Calu3 (cell line): ENCODE measurements at regions of chr3 and their contacts with region 1.

Region 1: DNA sequence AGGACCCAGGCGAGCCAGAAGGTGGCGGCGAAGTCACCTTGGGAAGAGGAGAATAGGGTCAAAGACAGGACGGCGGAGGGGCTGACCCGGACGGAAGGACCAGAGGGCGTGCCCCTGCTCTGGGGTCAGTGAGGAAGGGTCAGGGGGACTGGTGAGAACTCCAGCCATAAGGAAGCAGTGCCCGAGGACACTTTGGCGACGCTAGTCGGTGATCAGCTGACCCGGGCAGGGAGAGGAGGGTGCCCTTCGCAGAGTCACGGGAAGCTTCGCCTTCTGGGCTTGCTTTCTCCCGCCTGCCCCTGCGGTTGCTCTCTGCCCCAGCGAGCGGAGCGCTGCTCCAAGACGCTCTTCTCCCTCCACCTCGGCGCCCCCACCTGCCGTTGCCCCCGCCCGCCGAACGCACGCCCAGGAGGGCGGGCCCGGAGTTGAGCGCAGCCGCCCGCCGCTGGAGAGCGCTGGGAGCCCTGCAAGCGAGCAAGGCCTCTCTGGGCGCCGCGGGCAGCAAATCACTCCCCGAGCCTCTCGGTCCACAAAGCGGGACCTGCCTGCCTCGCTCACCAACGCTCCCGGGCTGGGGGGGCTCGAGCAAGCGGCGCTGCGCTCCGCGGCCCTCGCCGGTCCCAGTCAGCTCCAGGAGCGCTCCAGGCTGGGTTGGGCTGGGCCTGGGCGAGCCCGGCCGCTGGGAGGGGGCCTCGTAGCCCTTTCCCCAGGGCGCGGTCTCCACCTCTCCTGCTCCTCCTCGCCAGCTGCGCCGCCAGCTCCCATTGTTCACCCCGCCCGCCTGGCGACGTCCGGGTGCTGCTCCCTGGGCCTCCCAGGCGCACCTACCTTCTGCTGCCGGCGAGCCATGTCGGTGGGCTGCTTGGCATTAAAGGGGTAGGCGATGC is 1.2 kb downstream of the CADPS start:
- DNase-seq: peak; percentile 55
- H3K4me3 Mint-ChIP-seq: peak overlapping the region; percentile 88
- H3K27ac Mint-ChIP-seq: no peak overlapping the region
- H3K4me1 Mint-ChIP-seq: peaks cover 8% of the 10 kb centered on the region
- H3K27me3 Mint-ChIP-seq: peaks cover 62% of the 10 kb centered on the region
- CTCF ChIP-seq: no peak

Region 2: DNA sequence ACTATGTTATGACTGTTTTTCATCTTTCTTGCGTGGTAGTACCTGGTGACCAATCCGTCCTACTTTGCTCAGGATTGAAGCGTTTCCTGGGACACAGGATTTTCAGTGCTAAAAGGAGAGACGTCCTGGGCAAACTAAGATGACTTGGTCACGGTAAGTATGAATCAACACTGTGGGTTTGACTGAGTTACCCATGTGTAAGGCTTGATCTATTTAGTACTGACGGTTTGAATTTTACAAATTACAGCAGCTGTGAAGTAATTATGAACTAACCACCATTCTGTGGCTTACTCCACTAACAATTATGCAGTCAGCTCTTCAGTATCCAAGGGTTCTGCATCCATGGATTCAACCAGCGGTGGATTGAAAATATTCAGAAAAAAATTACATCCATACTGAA is 327.7 kb before region 1 on chr3:
- CTCF ChIA-PET with region 1: no interaction called
- intact Hi-C with region 1: no loop called
- DNase-seq: no peak
- H3K4me3 Mint-ChIP-seq: no peak overlapping the region
- H3K27ac Mint-ChIP-seq: no peak overlapping the region
- H3K4me1 Mint-ChIP-seq: no peaks in the 10 kb centered on the region
- H3K27me3 Mint-ChIP-seq: peaks cover 13% of the 10 kb centered on the region
- CTCF ChIP-seq: no peak

Region 3: GRCh38 chr3:62665598-62666437 is 208.2 kb before region 1 on chr3:
- CTCF ChIA-PET with region 1: interaction called, 4 read pairs
- intact Hi-C with region 1: loop called (anchors 2 kb)
- DNase-seq: peak; percentile 75
- H3K4me3 Mint-ChIP-seq: no peak overlapping the region
- H3K27ac Mint-ChIP-seq: no peak overlapping the region
- H3K4me1 Mint-ChIP-seq: no peaks in the 10 kb centered on the region
- H3K27me3 Mint-ChIP-seq: peaks cover 70% of the 10 kb centered on the region
- CTCF ChIP-seq: peak; percentile 59

Region 4: GRCh38 chr3:62990704-62991413 is 116.9 kb after region 1 on chr3:
- CTCF ChIA-PET with region 1: no interaction called
- intact Hi-C with region 1: loop called (anchors 10 kb)
- DNase-seq: no peak
- H3K4me3 Mint-ChIP-seq: no peak overlapping the region
- H3K27ac Mint-ChIP-seq: no peak overlapping the region
- H3K4me1 Mint-ChIP-seq: no peaks in the 10 kb centered on the region
- H3K27me3 Mint-ChIP-seq: peaks cover 28% of the 10 kb centered on the region
- CTCF ChIP-seq: no peak